ENCODE measurements at regions of chr10 and their contacts with region 1.

Region 1: GRCh38 chr10:76432274-76433012 is 1001.0 kb downstream of the LRMDA start:
- DNase-seq: peak; percentile 74
- ATAC-seq: peak; percentile 72
- H3K4me3 ChIP-seq: no peak overlapping the region
- H3K27ac ChIP-seq: 0 out of 2 replicates have a peak overlapping the region, but pooled peaks have one; percentile 5
- H3K4me1 ChIP-seq: peaks cover 21% of the 10 kb centered on the region
- H3K27me3 ChIP-seq: no peaks in the 10 kb centered on the region
- CTCF ChIP-seq: no peak
- POLR2A ChIP-seq: no peak
- RAD21 ChIP-seq: no peak

Region 2: DNA sequence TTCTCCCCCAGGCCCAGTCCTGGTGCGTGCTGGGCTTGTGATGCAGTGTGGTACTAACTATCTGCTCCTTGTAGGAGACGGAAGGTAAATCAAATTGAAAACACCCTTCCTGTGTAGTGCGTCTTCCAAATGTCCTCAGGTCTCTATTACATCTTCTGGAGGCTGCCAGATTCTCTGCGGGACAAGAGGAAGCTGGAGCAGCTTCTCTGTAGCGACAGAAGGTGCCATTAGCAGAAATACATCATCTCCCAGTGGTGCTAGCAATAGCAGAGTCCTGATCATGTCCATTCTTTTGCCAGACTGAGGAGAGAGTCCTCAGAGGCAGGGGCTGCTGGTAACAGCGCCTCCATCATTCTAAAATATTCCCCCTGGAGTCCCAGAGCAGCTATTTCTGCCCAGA is 325.8 kb before region 1 on chr10:
- CTCF ChIA-PET with region 1: no interaction called
- POLR2A ChIA-PET with region 1: no interaction called
- dilution Hi-C with region 1: no loop called
- in situ Hi-C with region 1: no loop called
- intact Hi-C with region 1: loop called (anchors 10 kb)
- DNase-seq: no peak
- ATAC-seq: no peak
- H3K4me3 ChIP-seq: no peak overlapping the region
- H3K27ac ChIP-seq: no peak overlapping the region
- H3K4me1 ChIP-seq: peaks cover 7% of the 10 kb centered on the region; the same call in 1 of the 2 replicates
- H3K27me3 ChIP-seq: no peaks in the 10 kb centered on the region; the same call in 1 of the 2 replicates
- CTCF ChIP-seq: no peak
- POLR2A ChIP-seq: no peak
- RAD21 ChIP-seq: no peak

Region 3: DNA sequence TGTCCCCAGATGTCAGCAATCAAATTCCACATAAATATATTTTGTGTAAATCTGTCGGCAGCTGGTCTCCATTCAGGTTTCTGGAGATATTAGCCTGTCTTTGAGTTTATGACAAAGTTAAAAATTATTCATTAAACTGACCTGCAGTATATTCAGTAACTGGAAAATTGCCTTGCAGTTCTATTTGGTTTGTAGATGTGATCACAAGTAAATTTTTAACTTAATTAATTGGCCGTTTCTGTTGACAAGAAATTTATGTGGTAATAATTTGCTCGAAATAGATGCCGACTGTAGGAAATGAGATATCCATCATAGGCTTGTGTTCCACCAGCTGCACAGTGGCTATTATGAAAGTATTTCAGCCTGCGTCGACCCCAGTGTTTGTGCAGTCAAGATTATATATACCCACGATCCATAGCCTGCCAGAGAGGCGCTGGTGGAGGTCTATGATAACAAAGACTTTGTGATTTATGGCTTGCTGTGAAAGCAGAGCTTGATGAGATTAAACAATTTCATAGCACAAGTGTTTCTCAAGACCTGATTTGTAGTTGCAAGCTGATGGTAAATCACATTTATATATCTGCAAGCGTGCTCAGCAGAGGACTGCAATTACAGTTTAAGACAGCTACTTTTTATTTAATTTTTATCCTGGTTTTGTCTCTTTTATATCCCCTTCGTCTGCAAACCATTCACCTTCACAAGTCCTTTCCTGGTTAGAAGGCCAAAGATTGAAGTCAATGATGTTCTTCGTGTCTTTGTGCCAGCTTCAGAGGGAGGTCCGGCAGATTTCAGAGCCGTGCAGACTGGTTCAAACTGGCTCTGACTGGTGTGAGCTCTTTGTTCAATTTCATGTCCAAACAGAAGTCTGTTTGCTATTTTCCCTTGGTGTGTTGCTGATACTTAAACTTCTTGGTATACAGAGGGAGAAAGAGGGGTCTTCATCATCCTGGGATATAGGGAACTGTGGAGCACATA is 150.1 kb before region 1 on chr10:
- CTCF ChIA-PET with region 1: interaction called, 10 read pairs
- POLR2A ChIA-PET with region 1: no interaction called
- dilution Hi-C with region 1: no loop called
- in situ Hi-C with region 1: no loop called
- intact Hi-C with region 1: no loop called
- DNase-seq: peak; percentile 69
- ATAC-seq: peak; percentile 61
- H3K4me3 ChIP-seq: no peak overlapping the region
- H3K27ac ChIP-seq: peak overlapping the region; percentile 60; the same call in 1 of the 2 replicates
- H3K4me1 ChIP-seq: peaks cover 10% of the 10 kb centered on the region
- H3K27me3 ChIP-seq: no peaks in the 10 kb centered on the region
- CTCF ChIP-seq: no peak
- POLR2A ChIP-seq: no peak
- RAD21 ChIP-seq: no peak

Region 4: DNA sequence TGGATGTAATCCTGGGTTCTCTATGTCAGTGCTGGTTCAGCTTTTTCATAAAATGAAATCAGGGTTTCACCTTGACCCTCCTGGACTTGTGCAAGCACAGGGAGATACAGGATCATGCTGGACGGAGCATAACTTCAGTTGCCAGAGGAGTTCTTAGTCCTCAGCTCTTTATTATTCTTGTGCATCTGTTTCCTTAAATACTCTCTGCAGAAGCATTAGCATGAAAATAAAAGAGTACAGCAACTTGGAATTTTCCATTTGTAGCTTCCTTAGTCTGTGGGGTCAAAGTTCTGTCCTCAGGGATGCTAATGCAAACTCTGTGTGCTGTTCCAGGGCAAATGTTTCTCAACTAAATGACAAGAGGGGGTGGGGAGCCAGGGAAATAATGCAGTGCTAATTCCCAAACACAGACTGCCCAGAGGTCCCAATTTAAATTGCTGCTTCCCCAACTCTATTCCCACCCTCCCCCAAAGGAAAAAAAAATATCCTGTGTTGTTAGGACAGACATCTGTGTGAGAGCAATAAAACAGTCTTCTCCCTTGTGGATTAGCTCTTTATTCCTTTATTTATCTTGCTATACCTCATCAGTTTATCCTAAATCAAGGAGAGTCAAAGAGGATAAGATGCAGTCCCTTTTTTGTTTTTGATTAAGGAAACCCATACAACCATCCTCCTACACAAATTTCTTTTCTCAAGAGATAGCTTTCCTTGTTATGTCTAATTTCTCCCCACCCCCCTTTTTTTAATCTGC is 96.1 kb before region 1 on chr10:
- CTCF ChIA-PET with region 1: no interaction called
- POLR2A ChIA-PET with region 1: no interaction called
- dilution Hi-C with region 1: no loop called
- in situ Hi-C with region 1: no loop called
- intact Hi-C with region 1: loop called (anchors 5 kb)
- DNase-seq: no peak
- ATAC-seq: peak; percentile 38
- H3K4me3 ChIP-seq: no peak overlapping the region
- H3K27ac ChIP-seq: peak overlapping the region; percentile 37; the same call in 1 of the 2 replicates
- H3K4me1 ChIP-seq: peaks cover 12% of the 10 kb centered on the region
- H3K27me3 ChIP-seq: no peaks in the 10 kb centered on the region
- CTCF ChIP-seq: no peak
- POLR2A ChIP-seq: no peak
- RAD21 ChIP-seq: no peak

Region 5: GRCh38 chr10:76403912-76404311 is 28.5 kb before region 1 on chr10:
- CTCF ChIA-PET with region 1: no interaction called
- POLR2A ChIA-PET with region 1: no interaction called
- dilution Hi-C with region 1: no loop called
- in situ Hi-C with region 1: no loop called
- intact Hi-C with region 1: no loop called
- DNase-seq: peak; percentile 36
- ATAC-seq: peak; percentile 54
- H3K4me3 ChIP-seq: no peak overlapping the region
- H3K27ac ChIP-seq: no peak overlapping the region
- H3K4me1 ChIP-seq: peaks cover 3% of the 10 kb centered on the region
- H3K27me3 ChIP-seq: no peaks in the 10 kb centered on the region
- CTCF ChIP-seq: no peak
- POLR2A ChIP-seq: no peak
- RAD21 ChIP-seq: no peak

Region 6: GRCh38 chr10:76456190-76456589 is 23.7 kb after region 1 on chr10:
- CTCF ChIA-PET with region 1: no interaction called
- POLR2A ChIA-PET with region 1: interaction called, 23 read pairs
- dilution Hi-C with region 1: no loop called
- in situ Hi-C with region 1: no loop called
- intact Hi-C with region 1: no loop called
- DNase-seq: no peak
- ATAC-seq: no peak
- H3K4me3 ChIP-seq: no peak overlapping the region
- H3K27ac ChIP-seq: no peak overlapping the region
- H3K4me1 ChIP-seq: no peaks in the 10 kb centered on the region
- H3K27me3 ChIP-seq: peaks cover 1% of the 10 kb centered on the region; the same call in 1 of the 2 replicates
- CTCF ChIP-seq: no peak
- POLR2A ChIP-seq: no peak
- RAD21 ChIP-seq: no peak

Region 7: DNA sequence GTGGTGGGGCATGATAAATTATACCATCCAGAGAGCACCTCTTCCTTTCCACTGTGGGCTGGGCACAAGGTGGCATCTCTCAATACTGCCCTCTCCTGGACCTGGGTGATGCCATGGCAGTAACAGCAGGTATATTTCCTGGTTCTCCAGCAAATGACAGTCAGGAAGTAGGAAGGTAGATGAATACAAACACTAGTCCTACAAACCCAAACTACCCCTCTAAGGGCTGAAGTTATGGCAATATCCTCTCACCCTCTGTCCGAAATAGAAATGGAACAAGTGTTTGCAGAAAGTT is 200.3 kb after region 1 on chr10:
- CTCF ChIA-PET with region 1: no interaction called
- POLR2A ChIA-PET with region 1: no interaction called
- dilution Hi-C with region 1: no loop called
- in situ Hi-C with region 1: no loop called
- intact Hi-C with region 1: no loop called
- DNase-seq: no peak
- ATAC-seq: no peak
- H3K4me3 ChIP-seq: no peak overlapping the region
- H3K27ac ChIP-seq: no peak overlapping the region
- H3K4me1 ChIP-seq: no peaks in the 10 kb centered on the region
- H3K27me3 ChIP-seq: peaks cover 28% of the 10 kb centered on the region
- CTCF ChIP-seq: peak; percentile 26; the same call in 1 of the 2 replicates
- POLR2A ChIP-seq: no peak
- RAD21 ChIP-seq: no peak

Region 8: GRCh38 chr10:76902949-76903348 is 470.5 kb after region 1 on chr10:
- CTCF ChIA-PET with region 1: no interaction called
- POLR2A ChIA-PET with region 1: no interaction called
- dilution Hi-C with region 1: no loop called
- in situ Hi-C with region 1: no loop called
- intact Hi-C with region 1: no loop called
- DNase-seq: no peak
- ATAC-seq: no peak
- H3K4me3 ChIP-seq: no peak overlapping the region
- H3K27ac ChIP-seq: no peak overlapping the region
- H3K4me1 ChIP-seq: no peaks in the 10 kb centered on the region
- H3K27me3 ChIP-seq: no peaks in the 10 kb centered on the region
- CTCF ChIP-seq: no peak
- POLR2A ChIP-seq: no peak
- RAD21 ChIP-seq: no peak

Region 9: DNA sequence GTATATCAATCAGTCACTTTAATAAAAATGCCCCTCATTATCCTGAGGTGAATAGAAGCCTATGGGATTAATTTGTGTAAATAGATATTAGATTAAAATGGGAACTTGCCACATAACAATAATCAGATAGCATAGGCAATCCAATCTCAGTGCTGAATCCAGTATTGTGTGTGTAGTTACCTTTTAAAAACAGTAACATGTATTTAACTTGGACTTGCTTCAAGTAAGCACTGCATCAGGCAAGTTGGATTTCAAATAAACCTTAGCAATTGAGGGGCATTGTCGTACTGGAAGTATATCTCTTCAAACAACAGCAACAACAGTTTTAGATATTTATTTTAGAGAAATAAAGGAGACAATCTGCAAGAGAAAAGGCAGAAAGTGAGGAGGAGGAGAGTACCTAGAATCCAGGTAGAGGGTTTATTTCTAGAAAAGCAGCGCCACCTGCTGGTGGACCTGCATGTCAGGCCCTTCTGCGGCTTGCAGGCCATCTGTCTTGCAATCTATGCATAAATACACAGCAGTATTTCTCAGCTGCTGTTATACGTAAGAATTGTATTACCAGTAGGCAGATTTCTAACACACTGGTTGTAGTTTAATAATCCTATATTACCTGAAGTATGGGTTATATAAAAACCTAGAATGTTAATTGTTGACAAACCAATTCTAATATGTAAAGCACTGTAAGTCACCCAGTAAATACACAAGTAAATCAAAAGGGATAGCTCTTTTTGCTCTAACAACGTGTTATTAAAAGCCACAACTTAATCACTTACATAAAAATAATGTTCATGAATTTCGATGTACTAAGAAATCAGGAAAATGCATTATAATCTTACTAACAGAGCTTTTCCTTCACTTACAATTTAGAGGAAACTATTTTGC is 552.4 kb after region 1 on chr10:
- CTCF ChIA-PET with region 1: interaction called, 3 read pairs
- POLR2A ChIA-PET with region 1: no interaction called
- dilution Hi-C with region 1: no loop called
- in situ Hi-C with region 1: no loop called
- intact Hi-C with region 1: loop called (anchors 10 kb)
- DNase-seq: peak; percentile 79
- ATAC-seq: peak; percentile 85
- H3K4me3 ChIP-seq: no peak overlapping the region
- H3K27ac ChIP-seq: no peak overlapping the region
- H3K4me1 ChIP-seq: no peaks in the 10 kb centered on the region; the same call in 1 of the 2 replicates
- H3K27me3 ChIP-seq: peaks cover 3% of the 10 kb centered on the region; the same call in 1 of the 2 replicates
- CTCF ChIP-seq: peak; percentile 81
- POLR2A ChIP-seq: no peak
- RAD21 ChIP-seq: peak; percentile 72

Region 10: DNA sequence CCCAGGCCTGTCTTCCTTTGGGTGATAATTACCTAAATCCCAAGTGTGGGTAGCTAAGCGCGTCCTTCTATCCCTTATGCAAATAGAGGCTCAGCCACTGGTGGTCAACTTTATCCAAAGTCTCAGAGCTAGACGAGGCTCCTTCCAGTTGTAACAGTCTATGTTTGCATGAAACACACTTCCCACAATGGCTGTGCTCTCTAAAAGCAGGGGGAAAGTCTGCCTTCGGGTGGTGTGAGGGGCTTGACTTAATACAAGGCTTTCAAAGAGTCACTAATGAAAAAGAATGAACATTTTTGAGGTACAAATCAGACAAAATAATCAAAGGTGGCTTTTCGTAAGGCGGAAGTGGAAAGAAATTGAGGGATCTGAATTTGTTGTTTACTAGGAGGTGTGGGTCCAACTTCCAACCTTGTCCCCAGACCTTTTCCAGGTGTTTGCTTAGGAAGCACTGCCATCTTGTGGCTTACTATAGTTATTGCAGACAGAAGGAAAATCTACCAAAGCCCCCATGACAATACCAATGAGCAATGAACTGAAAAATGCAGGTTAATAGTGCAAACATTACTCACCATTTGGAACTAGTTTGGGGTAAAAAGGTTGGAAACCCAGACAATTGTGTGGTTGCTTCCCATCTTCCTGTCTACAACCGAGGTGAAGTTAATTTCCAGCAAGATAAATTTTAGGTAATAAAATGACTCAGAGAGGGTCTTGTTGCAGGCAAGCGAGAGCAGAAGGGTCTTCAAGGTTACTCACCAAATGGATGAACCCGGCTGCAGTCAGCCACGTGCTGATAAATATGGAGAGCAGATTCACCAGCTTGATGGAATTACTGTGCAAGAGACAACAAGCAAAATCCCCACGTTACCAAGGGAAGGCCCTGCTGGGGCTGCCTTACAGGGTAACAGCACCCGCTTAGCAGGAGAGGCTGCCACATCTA is 679.4 kb after region 1 on chr10:
- CTCF ChIA-PET with region 1: no interaction called
- POLR2A ChIA-PET with region 1: no interaction called
- dilution Hi-C with region 1: no loop called
- in situ Hi-C with region 1: no loop called
- intact Hi-C with region 1: loop called (anchors 10 kb)
- DNase-seq: peak; percentile 87
- ATAC-seq: peak; percentile 90
- H3K4me3 ChIP-seq: no peak overlapping the region
- H3K27ac ChIP-seq: no peak overlapping the region
- H3K4me1 ChIP-seq: peaks cover 3% of the 10 kb centered on the region
- H3K27me3 ChIP-seq: no peaks in the 10 kb centered on the region
- CTCF ChIP-seq: peak; percentile 88
- POLR2A ChIP-seq: peak; percentile 38; the same call in 1 of the 2 replicates
- RAD21 ChIP-seq: peak; percentile 93

Measured in IMR-90 (cell line).